Right ventricle myocardium inferior (tissue), 1 donor: ENCODE measurements at regions of chr17 and their contacts with region 1.

Region 1: GRCh38 chr17:18141210-18141803 is 32.8 kb downstream of the MYO15A start:
- DNase-seq: peak; percentile 20
- ATAC-seq: no peak

Region 2: DNA sequence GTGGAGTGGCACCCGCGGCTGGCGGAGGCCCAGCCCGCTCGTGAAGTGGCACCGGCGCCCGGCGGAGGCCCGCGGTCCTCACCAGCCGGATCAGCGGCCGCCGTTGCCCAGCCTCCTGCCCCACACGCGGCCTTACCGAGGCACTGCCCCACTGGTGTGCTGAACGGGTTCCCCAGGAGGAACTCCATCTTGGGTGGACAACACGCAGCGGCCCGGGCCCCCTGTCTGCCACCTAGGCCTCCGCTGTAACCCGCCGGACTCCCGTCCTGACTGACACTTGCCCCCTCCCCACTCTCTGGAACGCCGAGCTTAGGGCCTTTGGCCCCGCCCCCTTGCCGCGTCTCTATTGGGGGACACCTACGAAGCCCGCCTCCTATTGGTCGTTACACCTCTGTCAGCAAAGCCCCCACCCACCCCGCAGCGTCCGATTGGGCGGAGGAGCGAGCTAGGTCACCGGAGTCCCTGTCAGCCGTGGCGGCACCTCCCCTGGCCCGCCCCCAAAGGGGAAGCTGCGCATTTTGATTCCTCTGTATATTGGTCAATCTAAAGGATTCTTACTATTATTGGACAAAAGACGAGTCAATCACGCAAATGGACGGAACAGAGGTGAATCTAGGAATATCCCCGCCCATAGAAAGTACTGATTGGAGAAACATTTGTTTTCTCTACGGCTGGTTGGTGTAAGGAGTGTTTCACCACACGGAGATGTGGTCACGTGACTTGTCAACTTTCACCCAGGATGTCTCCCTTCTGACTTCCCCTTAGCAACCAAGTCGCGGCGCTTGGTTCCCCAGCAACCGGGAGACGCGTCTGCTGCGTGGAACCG is 169.0 kb before region 1 on chr17 and contains the starts of genes DRC3 and TOM1L2:
- intact Hi-C with region 1: no loop called
- DNase-seq: peak; percentile 100
- ATAC-seq: peak; percentile 98
- total RNA-seq, gene DRC3: 1.6 TPM
- total RNA-seq, gene TOM1L2: 246 TPM

Region 3: DNA sequence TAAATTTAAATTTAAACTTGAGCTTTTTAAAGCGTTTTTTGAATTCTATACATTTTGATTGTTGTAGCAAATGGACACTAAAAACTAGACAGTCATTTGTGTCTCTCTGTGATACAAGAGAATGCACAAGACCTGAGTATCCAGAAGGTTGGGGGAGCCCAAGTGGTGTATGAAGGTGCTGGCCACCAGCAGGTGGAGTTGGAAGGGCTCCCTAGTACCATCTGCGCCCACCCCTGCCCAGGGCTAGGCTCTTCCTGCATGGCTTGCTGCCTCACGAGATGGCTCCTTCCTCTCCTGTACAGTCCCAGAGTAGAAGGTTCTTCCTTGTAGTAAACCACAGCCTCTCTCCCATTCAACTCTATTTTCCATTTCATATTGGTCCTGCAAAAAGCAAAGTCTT is 85.1 kb before region 1 on chr17:
- intact Hi-C with region 1: no loop called
- DNase-seq: no peak
- ATAC-seq: no peak

Region 4: GRCh38 chr17:18076936-18077335 is 64.4 kb before region 1 on chr17:
- intact Hi-C with region 1: no loop called
- DNase-seq: no peak
- ATAC-seq: no peak

Region 5: DNA sequence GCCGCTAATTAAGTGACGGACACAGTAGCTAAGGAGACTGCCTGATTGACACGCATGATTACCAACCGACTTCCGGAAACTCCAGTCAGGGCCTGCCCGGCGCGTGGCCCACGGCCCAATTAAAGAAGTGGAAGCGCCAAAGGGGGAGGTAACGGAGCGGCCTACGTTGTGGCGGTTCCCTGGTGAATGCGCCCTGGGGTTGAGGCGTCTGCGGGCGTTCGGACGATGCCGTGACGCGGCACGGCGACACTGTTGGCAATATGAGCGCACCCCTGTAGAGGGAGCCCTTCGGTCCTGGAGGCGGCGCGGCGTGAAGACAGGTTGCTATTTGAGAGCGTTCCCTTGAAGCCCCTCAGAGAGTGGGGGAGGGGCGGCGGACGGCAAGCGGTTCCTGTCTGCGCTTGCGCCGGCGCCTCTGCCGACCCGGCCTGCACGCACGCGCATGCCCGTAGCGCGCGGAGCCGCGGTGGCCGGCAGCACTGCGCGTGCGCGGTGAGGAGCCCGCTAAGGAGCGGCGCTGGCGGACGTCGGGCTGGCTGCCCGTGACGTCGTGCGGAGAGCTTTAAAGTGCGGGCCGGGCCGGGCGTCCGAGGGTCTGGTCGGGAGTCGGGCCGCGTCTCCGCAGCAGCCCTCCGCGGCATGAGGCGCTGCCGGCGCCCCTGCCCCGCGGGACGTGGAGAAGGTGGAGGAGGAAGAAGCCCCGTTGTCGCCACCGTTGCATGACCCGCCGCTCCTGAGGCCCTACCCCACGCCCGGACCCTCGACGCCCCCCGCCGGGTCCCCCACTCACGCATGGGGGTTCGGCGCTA is 42.2 kb after region 1 on chr17 and contains the start of gene ALKBH5:
- intact Hi-C with region 1: loop called (anchors 5 kb)
- DNase-seq: peak; percentile 99
- ATAC-seq: peak; percentile 93
- total RNA-seq, gene ALKBH5: 183 TPM

Region 6: GRCh38 chr17:18217412-18218015 is 76.2 kb after region 1 on chr17:
- intact Hi-C with region 1: loop called (anchors 5 kb)
- DNase-seq: peak; percentile 80
- ATAC-seq: peak; percentile 79

Region 7: GRCh38 chr17:18260332-18261144 is 119.2 kb after region 1 on chr17 and contains the start of gene MIEF2:
- intact Hi-C with region 1: loop called (anchors 1 kb)
- DNase-seq: peak; percentile 98
- ATAC-seq: peak; percentile 87
- total RNA-seq, gene MIEF2: 31.3 TPM

Region 8: GRCh38 chr17:18280766-18281371 is 139.6 kb after region 1 on chr17:
- intact Hi-C with region 1: no loop called
- DNase-seq: no peak
- ATAC-seq: no peak